Activated CD4-positive, alpha-beta memory T cell treated with anti-CD3 and anti-CD28 coated beads, Interleukin-2, amount 10 ng/mL, durations not matched to agents 7 days and 5 days (primary cell): ENCODE measurements at regions of chr12 and their contacts with region 1.

Region 1: DNA sequence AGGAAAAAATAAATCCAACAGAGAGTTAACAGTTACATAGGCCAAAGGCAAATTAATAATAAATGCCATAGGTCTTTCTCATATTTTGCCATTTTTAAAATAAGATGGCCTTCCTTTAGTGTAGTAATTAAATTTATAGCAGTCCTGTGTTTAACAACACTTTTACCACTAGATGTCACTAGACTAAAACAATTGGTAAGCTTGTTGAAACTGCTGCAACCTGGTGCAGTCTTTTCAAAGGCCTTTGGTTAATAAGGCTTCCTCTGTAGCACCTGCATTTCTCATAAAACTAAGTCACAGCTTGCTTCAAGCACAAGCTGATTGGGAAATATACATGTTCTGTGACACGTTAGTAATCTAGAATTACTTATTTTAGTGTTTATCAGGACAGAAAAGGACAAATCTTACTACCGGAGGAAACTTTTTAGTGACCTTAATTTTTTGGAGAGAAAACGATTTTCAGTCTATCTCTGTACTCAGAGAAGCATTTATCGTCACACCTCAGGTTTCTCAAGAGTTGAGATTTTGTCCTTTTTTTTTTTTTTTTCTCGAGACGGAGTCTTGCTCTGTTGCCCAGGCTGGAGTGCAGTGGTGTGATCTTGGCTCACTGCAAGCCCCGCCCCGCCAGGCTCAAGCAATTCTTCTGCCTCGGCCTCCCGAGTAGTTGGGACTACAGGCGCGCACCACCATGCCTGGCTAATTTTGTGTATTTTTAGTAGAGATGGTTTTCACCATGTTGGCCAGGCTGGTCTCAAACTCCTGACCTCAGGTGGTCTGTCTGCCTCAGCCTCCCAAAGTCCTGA is 20.0 kb downstream of the BORCS5 start:
- DNase-seq: no peak
- H3K4me3 Mint-ChIP-seq: no peak overlapping the region
- H3K27ac Mint-ChIP-seq: peak overlapping the region; percentile 65
- H3K4me1 Mint-ChIP-seq: peaks cover 60% of the 10 kb centered on the region
- H3K27me3 Mint-ChIP-seq: no peaks in the 10 kb centered on the region

Region 2: GRCh38 chr12:12442548-12443071 is 65.8 kb after region 1 on chr12:
- CTCF ChIA-PET with region 1: interaction called, 7 read pairs
- POLR2A ChIA-PET with region 1: interaction called, 18 read pairs
- DNase-seq: no peak
- H3K4me3 Mint-ChIP-seq: peak overlapping the region; percentile 39
- H3K27ac Mint-ChIP-seq: peak overlapping the region; percentile 98
- H3K4me1 Mint-ChIP-seq: peaks cover 91% of the 10 kb centered on the region
- H3K27me3 Mint-ChIP-seq: no peaks in the 10 kb centered on the region

Region 3: GRCh38 chr12:12467688-12468261 is 90.9 kb after region 1 on chr12:
- CTCF ChIA-PET with region 1: interaction called, 17 read pairs
- POLR2A ChIA-PET with region 1: interaction called, 238 read pairs
- DNase-seq: peak; percentile 77
- H3K4me3 Mint-ChIP-seq: peak overlapping the region; percentile 40
- H3K27ac Mint-ChIP-seq: peak overlapping the region; percentile 97
- H3K4me1 Mint-ChIP-seq: peaks cover 87% of the 10 kb centered on the region
- H3K27me3 Mint-ChIP-seq: no peaks in the 10 kb centered on the region

Region 4: DNA sequence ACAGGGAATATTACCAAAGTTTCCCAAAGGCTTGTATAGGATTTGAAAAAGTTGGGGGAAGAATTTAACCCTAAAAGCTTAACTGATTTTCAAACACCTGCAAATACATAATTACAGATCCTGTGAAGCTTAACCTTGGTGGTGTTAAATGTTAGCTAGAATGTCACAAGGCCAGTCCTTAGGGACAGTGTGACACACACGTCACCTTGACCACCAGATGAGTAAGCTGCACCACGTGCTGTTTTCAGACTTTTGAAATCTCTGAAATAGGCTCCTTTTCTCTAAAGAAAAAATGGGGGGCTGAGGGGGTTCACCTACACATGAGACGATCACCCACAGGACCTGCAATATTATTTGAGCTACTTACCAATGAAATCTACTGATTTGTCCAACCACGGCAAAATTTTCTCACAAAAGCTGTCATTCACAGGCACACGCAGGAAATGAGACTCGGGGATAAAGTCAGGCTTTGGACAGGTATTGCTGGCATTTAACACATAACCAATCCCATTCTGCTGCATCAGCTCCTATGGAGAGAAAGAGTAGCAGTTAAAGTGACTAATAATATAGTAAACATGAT is 109.9 kb after region 1 on chr12:
- CTCF ChIA-PET with region 1: interaction called, 11 read pairs
- POLR2A ChIA-PET with region 1: interaction called, 238 read pairs
- DNase-seq: no peak
- H3K4me3 Mint-ChIP-seq: no peak overlapping the region
- H3K27ac Mint-ChIP-seq: peak overlapping the region; percentile 77
- H3K4me1 Mint-ChIP-seq: peaks cover 66% of the 10 kb centered on the region
- H3K27me3 Mint-ChIP-seq: no peaks in the 10 kb centered on the region

Region 5: GRCh38 chr12:12654691-12655460 is 278.0 kb after region 1 on chr12:
- CTCF ChIA-PET with region 1: interaction called, 18 read pairs
- POLR2A ChIA-PET with region 1: interaction called, 7 read pairs
- DNase-seq: no peak
- H3K4me3 Mint-ChIP-seq: no peak overlapping the region
- H3K27ac Mint-ChIP-seq: no peak overlapping the region
- H3K4me1 Mint-ChIP-seq: peaks cover 8% of the 10 kb centered on the region
- H3K27me3 Mint-ChIP-seq: no peaks in the 10 kb centered on the region

Region 6: DNA sequence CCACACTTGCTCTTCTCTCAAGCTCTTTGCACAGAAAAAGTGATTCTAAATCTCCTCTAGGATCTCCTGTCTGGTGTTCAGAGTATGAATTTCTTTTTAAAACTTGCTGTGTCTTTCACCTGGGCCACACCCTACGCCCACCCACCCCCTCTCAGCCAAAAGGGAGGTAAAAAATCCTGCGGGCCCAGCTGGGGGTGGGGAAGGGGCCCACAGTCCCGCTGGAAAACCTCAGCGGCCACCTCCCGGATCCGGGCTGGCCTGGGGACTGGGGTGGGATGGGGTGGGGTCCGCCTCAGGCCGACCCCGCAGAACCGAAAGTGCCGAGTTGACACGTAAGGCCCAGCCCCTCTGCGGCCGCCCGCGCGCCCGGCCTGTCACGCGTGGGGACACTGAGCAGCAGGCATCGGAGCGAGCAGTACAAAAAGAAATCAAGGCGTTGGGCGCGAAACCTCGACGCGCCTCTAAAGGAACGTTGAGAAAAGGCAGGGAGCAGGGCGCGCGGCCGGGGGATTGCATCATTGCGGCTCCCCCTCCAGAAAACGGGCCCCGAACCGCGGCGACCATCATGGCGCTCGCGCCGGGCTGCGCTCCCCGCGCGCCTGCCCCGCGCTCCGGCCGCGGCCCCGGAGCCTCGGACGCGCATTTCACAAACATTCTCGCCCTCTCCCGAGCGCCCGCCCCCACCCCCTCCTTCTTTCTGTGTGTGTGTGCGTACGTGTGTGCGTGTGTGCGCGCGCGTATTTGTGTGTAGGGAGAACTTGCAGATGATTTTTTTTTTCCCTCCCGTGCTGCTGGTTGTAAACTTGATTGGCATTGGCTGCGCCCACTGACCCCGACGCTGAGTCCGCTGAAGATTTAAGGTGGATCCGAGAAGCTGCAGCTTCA is 348.1 kb after region 1 on chr12:
- CTCF ChIA-PET with region 1: interaction called, 3 read pairs
- POLR2A ChIA-PET with region 1: interaction called, 152 read pairs
- DNase-seq: peak; percentile 92
- H3K4me3 Mint-ChIP-seq: peak overlapping the region; percentile 94
- H3K27ac Mint-ChIP-seq: peak overlapping the region; percentile 96
- H3K4me1 Mint-ChIP-seq: peaks cover 33% of the 10 kb centered on the region
- H3K27me3 Mint-ChIP-seq: no peaks in the 10 kb centered on the region